Activated CD4-positive, alpha-beta memory T cell treated with anti-CD3 and anti-CD28 coated beads for 36 hours (primary cell): ENCODE measurements at regions of chr11 and their contacts with region 1.

Region 1: DNA sequence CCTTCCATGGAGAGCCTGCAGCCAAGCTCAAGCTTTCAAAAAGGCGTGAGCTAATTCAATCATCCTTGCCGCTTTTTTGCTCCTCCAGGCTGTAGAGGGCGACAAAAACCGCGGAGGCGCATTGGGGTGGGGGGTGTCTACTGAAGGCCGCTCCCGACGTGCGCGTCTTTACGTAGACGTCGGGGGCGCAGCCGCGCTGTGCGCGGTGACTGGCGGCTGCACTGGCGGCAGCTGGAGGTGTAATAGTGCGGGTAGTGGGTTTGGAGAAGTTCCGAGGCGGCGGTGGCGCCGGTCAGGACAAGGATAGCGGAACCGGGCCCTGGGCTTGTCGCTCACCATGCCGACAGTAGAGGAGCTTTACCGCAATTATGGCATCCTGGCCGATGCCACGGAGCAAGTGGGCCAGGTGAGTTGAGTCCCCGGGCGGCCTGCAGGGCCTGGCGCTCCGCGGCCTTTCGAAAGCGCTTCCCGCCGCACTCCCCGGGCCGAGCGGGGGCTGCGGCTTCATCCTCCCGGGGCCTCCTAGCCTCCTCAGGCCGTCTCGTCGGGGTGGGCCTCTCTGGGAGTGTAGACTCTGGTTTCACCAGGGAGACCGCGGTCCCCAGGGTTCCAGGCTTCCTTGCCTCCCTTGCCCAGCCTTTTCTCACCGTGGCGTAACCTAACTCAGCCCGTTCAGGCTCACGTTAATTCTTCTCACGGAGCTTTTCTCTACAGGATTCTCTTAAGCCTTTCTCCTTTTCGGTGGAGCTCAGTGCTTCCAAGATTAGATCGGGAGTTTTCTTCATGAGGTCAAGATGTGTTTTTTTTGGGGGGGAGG is at the start of gene API5:
- DNase-seq: peak; percentile 96
- H3K4me3 Mint-ChIP-seq: peak within 1 kb of the TSS; percentile 99
- H3K27ac Mint-ChIP-seq: peak within 1 kb of the TSS; percentile 82
- H3K4me1 Mint-ChIP-seq: peaks cover 46% of the 10 kb centered on the region
- H3K27me3 Mint-ChIP-seq: no peaks in the 10 kb centered on the region
- total RNA-seq, gene API5: 154 to 166 TPM

Region 2: GRCh38 chr11:42923651-42924050 is 388.3 kb before region 1 on chr11:
- CTCF ChIA-PET with region 1: no interaction called
- POLR2A ChIA-PET with region 1: no interaction called
- intact Hi-C with region 1: no loop called
- DNase-seq: no peak
- H3K4me3 Mint-ChIP-seq: no peak overlapping the region
- H3K27ac Mint-ChIP-seq: no peak overlapping the region
- H3K4me1 Mint-ChIP-seq: no peaks in the 10 kb centered on the region
- H3K27me3 Mint-ChIP-seq: no peaks in the 10 kb centered on the region

Region 3: DNA sequence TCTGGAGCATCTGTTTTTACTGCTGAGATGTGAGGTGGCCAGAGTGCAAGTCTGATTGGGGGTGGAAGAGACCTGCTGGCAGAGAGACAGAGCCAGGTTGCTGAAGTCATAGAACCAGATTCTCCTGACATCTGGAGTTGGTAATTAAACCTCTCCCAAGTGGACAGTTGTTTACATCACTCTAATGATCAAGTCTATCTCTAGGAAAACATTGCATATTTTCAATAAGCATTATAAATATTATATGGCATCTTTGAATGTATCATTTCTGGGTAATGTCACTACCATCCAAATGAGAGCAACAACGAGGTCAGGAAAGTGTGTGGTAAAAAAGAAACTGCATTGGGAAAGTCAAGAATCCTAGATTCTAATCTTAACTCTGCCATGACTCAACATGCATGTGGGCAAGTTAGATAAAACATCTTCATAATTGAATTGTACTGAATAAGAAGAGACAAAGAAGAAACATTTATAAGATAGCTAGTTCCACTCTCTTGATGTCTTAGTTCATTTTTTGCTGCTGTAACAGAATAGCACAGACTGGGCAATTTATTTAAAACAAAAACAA is 351.4 kb before region 1 on chr11:
- CTCF ChIA-PET with region 1: no interaction called
- POLR2A ChIA-PET with region 1: no interaction called
- intact Hi-C with region 1: no loop called
- DNase-seq: no peak
- H3K4me3 Mint-ChIP-seq: no peak overlapping the region
- H3K27ac Mint-ChIP-seq: no peak overlapping the region
- H3K4me1 Mint-ChIP-seq: no peaks in the 10 kb centered on the region
- H3K27me3 Mint-ChIP-seq: no peaks in the 10 kb centered on the region

Region 4: GRCh38 chr11:43150697-43151096 is 161.3 kb before region 1 on chr11:
- CTCF ChIA-PET with region 1: no interaction called
- POLR2A ChIA-PET with region 1: no interaction called
- intact Hi-C with region 1: loop called (anchors 2 kb)
- DNase-seq: no peak
- H3K4me3 Mint-ChIP-seq: no peak overlapping the region
- H3K27ac Mint-ChIP-seq: no peak overlapping the region
- H3K4me1 Mint-ChIP-seq: no peaks in the 10 kb centered on the region
- H3K27me3 Mint-ChIP-seq: no peaks in the 10 kb centered on the region

Region 5: DNA sequence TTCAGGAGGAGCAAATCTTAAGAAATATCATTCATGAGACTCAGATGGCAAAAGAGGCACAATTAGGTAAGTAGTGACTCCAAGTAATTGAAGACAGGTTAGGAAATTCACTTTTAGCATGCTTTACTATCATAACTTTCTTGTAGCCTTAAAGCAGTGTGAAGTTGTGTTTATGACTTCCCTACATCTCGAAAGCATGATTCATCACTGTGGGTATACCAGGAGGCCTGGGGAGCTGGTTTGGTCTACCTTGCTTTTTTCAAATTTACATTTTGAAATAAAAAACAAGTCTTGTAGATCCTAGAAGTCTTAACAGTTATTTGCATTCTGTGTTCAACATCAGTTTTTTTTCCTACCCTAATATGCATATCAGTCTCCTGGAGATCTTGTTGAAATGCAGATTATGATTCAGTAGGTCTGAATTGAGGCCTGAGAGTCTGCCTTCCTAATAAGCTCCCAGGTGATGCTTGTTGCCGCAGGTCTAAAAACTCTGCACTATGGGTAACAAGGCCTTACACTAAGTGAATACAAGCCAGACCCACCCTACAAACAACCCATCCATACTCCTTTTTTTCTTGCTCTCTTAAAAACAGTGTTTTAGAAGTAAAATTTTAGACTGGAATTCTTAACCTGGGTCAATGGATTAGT is 88.1 kb after region 1 on chr11:
- CTCF ChIA-PET with region 1: interaction called, 5 read pairs
- POLR2A ChIA-PET with region 1: no interaction called
- intact Hi-C with region 1: loop called (anchors 5 kb)
- DNase-seq: peak; percentile 28
- H3K4me3 Mint-ChIP-seq: no peak overlapping the region
- H3K27ac Mint-ChIP-seq: peak overlapping the region; percentile 72
- H3K4me1 Mint-ChIP-seq: peaks cover 33% of the 10 kb centered on the region
- H3K27me3 Mint-ChIP-seq: no peaks in the 10 kb centered on the region

Region 6: GRCh38 chr11:43567396-43567975 is 255.5 kb after region 1 on chr11:
- CTCF ChIA-PET with region 1: no interaction called
- POLR2A ChIA-PET with region 1: no interaction called
- intact Hi-C with region 1: loop called (anchors 5 kb)
- DNase-seq: no peak
- H3K4me3 Mint-ChIP-seq: no peak overlapping the region
- H3K27ac Mint-ChIP-seq: no peak overlapping the region
- H3K4me1 Mint-ChIP-seq: no peaks in the 10 kb centered on the region
- H3K27me3 Mint-ChIP-seq: peaks cover 40% of the 10 kb centered on the region

Region 7: DNA sequence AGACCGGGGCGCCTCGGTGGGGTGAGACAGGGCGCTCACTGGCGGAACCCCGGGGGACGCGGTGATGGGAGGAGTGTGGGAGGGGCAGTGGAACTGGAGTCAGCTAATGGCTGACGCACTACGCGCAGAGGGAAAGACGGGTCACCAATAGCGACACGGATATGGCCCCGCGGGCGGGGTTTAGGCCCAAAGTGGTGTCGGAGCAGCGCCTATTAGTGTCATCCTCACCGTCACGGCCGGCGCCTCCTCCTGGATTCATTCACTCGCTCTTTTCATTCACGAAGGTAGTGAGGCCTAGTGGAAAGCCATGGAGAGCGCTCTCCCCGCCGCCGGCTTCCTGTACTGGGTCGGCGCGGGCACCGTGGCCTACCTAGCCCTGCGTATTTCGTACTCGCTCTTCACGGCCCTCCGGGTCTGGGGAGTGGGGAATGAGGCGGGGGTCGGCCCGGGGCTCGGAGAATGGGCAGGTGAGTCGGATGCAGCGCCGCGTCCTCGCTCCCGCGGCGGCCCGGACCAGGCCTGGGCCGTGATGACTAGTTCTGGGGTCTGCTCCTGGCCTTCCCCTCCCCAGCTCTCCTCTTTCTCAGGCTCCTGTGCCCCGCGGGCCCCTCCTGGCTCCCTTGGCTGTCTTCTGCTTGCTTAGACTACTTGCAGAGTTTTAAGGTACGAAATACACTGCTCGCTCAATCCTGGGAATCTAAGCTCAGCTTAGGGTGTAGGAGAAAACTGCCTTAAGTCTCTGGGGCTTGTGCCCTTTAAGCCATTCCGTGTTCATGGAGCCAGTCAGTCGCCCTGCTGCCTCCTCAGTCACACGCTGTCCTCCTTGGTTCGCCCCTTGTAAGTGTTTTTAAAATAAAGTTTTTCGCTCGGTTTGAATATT is 368.8 kb after region 1 on chr11 and contains the start of gene HSD17B12:
- CTCF ChIA-PET with region 1: no interaction called
- POLR2A ChIA-PET with region 1: no interaction called
- intact Hi-C with region 1: loop called (anchors 1 kb)
- DNase-seq: peak; percentile 100
- H3K4me3 Mint-ChIP-seq: peak within 1 kb of the TSS; percentile 92
- H3K27ac Mint-ChIP-seq: peak within 1 kb of the TSS; percentile 94
- H3K4me1 Mint-ChIP-seq: peaks cover 33% of the 10 kb centered on the region
- H3K27me3 Mint-ChIP-seq: no peaks in the 10 kb centered on the region
- total RNA-seq, gene HSD17B12: 32.8 to 35.3 TPM